AG04449 (cell line): ENCODE measurements at regions of chr15 and their contacts with region 1.

Region 1: DNA sequence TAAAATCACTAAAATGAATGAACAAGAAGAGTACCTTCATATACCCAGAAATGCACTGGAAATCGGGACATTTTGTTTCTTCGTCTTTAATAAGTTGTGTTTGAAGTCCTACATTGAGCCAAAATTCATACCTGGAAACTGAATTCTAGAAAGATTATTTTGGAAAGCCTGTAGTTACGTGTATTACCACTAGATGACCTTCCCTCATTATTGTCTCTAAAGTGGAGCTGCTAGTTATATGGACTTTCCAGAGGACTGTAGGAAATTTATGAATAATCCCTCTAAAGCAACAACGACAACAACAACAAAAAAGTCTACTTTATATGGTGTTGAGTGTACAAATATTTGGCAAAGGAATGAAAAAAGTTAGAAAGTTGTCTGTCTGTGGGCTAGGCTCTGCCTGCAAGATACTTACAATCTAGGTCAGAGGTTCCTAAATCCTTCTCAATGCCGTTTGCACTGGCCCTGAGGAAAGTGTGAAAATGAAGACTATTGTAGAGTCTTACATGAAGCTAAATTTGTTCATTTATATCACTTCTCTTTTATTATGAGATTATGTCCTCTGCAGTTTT is 234.8 kb upstream of the NR2E3 start:
- DNase-seq: no peak
- H3K4me3 ChIP-seq: no peak overlapping the region
- CTCF ChIP-seq: peak; percentile 38

Region 2: DNA sequence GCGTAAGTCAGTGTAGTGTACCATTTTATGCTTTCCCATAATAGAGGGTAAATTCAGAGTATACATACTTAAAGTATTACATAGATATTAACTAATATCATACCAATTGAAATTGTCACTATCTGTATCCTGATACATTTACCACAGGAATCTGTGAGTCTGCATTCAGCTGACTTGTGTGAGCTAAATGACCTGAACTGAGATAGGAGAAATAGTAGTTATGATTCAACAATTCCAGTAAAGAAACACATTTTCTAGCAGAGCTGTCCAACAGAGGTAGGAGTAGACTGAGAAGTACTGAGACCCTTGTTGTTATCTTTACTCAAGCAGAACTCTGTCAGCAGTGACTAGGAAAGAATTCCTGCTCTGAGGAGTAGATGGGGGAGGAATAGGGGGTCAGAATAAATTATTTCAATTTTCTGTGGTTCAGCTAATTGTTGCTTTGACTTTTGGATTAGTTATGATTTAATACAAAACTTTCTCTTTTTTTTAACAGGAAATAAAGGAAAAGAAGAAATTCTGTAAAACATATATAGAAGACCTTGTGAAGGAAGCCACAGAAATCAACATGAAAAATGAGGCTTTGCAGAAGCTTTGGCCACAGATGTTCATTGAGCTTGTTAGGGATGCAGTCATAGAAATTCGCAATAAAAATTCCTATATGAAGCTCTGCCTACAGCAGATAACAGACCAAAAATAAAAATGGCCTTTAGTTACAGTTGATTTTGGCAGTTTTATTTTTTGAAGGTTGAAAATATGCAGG is 526.5 kb before region 1 on chr15:
- CTCF ChIA-PET with region 1: no interaction called
- POLR2A ChIA-PET with region 1: no interaction called
- DNase-seq: peak; percentile 97
- H3K4me3 ChIP-seq: no peak overlapping the region
- CTCF ChIP-seq: no peak

Region 3: GRCh38 chr15:71538181-71538580 is 37.4 kb before region 1 on chr15:
- CTCF ChIA-PET with region 1: no interaction called
- POLR2A ChIA-PET with region 1: no interaction called
- DNase-seq: no peak
- H3K4me3 ChIP-seq: no peak overlapping the region
- CTCF ChIP-seq: no peak

Region 4: DNA sequence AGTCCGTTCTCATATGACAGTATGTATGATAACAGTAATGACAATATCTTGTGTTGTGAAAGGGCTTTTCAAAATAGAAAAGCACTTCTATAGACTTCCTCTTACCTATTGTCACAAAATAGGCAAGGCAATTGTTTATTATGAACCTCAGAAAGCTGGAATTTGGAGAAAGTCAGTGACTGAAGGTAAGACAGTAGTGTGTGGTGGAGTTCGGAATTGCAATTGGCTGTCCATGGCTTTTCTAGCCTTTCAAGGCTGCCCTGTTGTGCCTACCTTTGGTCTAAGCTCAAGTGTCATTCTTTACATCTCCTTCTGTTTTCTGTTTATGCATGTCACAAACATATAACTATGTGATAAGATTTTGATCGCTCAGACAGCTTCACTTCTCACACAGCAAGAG is 15.5 kb after region 1 on chr15:
- CTCF ChIA-PET with region 1: interaction called, 12 read pairs
- POLR2A ChIA-PET with region 1: no interaction called
- DNase-seq: no peak
- H3K4me3 ChIP-seq: no peak overlapping the region
- CTCF ChIP-seq: no peak

Region 5: GRCh38 chr15:71599418-71600151 is 24.0 kb after region 1 on chr15:
- CTCF ChIA-PET with region 1: interaction called, 13 read pairs
- POLR2A ChIA-PET with region 1: no interaction called
- DNase-seq: no peak
- H3K4me3 ChIP-seq: no peak overlapping the region
- CTCF ChIP-seq: no peak

Region 6: DNA sequence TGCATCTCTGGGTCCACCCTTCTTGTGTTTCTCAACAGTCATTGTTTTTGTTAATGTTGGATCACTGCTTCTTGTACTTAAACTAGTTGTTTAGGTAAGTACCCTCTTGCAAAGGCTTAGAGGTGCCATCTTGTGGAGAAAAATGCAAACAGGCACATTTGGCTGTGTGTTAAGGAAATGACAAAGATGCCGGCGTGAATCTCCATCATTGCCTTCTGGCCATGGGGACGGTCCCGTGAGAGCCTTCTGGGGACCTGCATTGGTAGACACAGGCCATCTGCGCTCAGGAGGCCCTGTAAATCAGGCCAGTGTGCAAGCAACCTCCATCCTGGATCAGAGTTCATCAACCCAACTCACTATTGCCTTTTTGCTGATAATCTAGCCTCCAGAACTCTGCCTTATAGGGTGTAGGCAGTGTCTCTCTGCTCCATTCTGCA is 76.2 kb after region 1 on chr15:
- CTCF ChIA-PET with region 1: interaction called, 37 read pairs
- POLR2A ChIA-PET with region 1: no interaction called
- DNase-seq: peak; percentile 69
- H3K4me3 ChIP-seq: no peak overlapping the region
- CTCF ChIP-seq: peak; percentile 63

Region 7: GRCh38 chr15:71660501-71660900 is 84.9 kb after region 1 on chr15:
- CTCF ChIA-PET with region 1: interaction called, 11 read pairs
- POLR2A ChIA-PET with region 1: no interaction called
- DNase-seq: no peak
- H3K4me3 ChIP-seq: no peak overlapping the region
- CTCF ChIP-seq: no peak

Region 8: DNA sequence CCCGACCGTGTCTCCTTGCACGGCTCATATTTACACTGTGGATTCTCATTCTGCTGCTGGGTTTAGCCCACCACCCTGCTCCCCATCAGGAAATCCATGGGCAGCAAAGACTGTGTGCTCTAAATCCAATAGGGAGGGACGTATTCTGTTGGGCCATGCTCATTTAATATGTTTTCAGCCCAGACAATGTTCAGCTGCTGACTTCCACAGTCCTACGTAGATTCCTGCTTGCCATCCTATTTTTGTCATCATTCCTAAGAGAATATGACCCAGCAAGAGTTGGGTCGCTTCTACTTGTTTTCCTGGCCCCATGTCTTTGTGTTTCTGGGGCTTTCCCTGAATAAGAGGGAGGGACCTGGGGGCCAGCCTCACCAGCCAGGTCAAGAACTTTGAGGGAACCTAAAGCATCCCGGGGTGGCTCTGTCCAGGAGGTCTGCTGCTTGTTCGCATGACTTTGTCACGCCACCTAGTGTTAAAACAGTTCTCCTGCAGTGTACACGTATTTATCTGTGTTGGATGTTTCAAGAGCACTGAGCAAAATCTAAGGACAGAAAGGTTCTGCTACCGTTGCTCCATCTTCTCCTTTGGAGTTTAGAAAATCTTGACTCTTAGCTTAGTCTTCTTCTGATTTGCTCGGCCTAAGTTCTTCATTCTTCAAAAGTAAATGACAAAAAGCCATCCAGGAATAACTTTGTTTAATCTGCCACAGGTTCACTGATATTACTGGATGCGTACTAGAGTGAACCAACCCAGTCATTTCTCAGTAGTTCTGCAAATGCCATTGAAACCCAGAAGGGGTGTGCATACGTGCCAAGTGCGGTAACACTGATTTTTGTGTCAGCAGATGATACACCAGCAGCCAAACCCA is 155.0 kb after region 1 on chr15:
- CTCF ChIA-PET with region 1: interaction called, 21 read pairs
- POLR2A ChIA-PET with region 1: no interaction called
- DNase-seq: no peak
- H3K4me3 ChIP-seq: no peak overlapping the region
- CTCF ChIP-seq: peak; percentile 83

Region 9: GRCh38 chr15:71752604-71753289 is 177.2 kb after region 1 on chr15:
- CTCF ChIA-PET with region 1: no interaction called
- POLR2A ChIA-PET with region 1: no interaction called
- DNase-seq: peak; percentile 92
- H3K4me3 ChIP-seq: no peak overlapping the region
- CTCF ChIP-seq: peak; percentile 62